ENCODE measurements at regions of chr6 and their contacts with region 1.

Region 1: GRCh38 chr6:137938770-137939379 is 71.8 kb downstream of the TNFAIP3 start:
- DNase-seq: no peak
- H3K4me3 ChIP-seq: no peak overlapping the region
- H3K27ac ChIP-seq: no peak overlapping the region
- H3K4me1 ChIP-seq: peaks cover 0 to 11% (median 4%) of the 10 kb centered on the region in 4 experiments
- H3K27me3 ChIP-seq: no peaks in the 10 kb centered on the region

Region 2: DNA sequence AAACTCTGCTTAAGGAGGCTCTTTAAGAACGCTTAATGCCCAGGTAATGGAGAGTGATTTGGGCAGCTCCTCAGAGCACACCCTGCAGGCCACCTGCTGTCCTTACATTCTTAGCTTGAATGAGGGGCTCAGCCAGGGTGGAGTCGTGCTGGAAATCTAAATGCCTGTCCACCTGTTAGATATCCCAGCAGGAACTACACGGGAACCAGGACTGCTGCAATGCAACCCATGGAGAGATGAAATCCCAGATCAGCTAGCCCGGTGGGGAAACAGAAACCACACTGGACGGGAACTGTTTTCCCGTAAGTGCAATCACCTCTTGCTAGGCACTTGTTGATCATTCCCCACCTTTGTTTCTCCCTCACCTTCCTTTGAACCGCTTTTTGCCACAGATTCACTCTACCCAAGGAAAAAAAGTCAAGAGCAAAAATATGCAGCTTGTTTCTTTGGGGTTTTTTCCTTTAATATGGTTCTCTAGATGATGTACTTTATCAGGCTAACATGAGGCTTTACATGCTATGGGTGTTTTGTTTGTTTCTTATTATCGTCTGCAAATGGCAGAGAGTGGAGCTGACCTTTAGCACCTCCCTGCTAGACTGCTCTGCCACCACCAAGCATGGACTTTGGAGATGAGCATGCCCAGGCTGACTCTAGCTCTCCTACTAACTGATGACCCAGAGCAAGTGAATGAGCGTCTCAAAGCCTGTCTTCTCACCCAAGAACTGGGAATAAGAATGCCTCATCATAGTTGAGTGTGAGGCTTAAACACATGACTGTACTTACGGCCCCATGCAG is 197.7 kb before region 1 on chr6:
- CTCF ChIA-PET with region 1: no interaction called
- POLR2A ChIA-PET with region 1: no interaction called
- DNase-seq: no peak
- H3K4me3 ChIP-seq: no peak overlapping the region
- H3K27ac ChIP-seq: no peak overlapping the region
- H3K4me1 ChIP-seq: peaks cover 0 to 11% (median 3%) of the 10 kb centered on the region in 4 experiments
- H3K27me3 ChIP-seq: no peaks in the 10 kb centered on the region

Region 3: DNA sequence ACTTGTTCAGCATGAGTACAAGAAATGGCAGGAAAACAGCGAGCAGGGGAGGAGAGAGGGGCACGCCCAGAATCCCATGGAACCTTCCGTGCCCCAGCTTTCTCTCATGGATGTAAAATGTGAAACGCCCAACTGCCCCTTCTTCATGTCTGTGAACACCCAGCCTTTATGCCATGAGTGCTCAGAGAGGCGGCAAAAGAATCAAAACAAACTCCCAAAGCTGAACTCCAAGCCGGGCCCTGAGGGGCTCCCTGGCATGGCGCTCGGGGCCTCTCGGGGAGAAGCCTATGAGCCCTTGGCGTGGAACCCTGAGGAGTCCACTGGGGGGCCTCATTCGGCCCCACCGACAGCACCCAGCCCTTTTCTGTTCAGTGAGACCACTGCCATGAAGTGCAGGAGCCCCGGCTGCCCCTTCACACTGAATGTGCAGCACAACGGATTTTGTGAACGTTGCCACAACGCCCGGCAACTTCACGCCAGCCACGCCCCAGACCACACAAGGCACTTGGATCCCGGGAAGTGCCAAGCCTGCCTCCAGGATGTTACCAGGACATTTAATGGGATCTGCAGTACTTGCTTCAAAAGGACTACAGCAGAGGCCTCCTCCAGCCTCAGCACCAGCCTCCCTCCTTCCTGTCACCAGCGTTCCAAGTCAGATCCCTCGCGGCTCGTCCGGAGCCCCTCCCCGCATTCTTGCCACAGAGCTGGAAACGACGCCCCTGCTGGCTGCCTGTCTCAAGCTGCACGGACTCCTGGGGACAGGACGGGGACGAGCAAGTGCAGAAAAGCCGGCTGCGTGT is 60.2 kb before region 1 on chr6:
- CTCF ChIA-PET with region 1: interaction called, 19 read pairs
- POLR2A ChIA-PET with region 1: no interaction called
- DNase-seq: no peak
- H3K4me3 ChIP-seq: no peak overlapping the region
- H3K27ac ChIP-seq: no peak overlapping the region
- H3K4me1 ChIP-seq: peaks cover 2 to 19% (median 15%) of the 10 kb centered on the region in 4 experiments
- H3K27me3 ChIP-seq: no peaks in the 10 kb centered on the region

Region 4: GRCh38 chr6:137921823-137922222 is 17.1 kb before region 1 on chr6:
- CTCF ChIA-PET with region 1: interaction called, 15 read pairs
- POLR2A ChIA-PET with region 1: no interaction called
- DNase-seq: peak in 2 of 3 donors; percentile 36 to 38
- H3K4me3 ChIP-seq: no peak overlapping the region
- H3K27ac ChIP-seq: no peak overlapping the region
- H3K4me1 ChIP-seq: peaks cover 12 to 28% (median 22%) of the 10 kb centered on the region in 4 experiments
- H3K27me3 ChIP-seq: no peaks in the 10 kb centered on the region

Region 5: GRCh38 chr6:137951064-137951597 is 12.3 kb after region 1 on chr6:
- CTCF ChIA-PET with region 1: interaction called, 22 read pairs
- POLR2A ChIA-PET with region 1: no interaction called
- DNase-seq: no peak
- H3K4me3 ChIP-seq: no peak overlapping the region
- H3K27ac ChIP-seq: no peak overlapping the region
- H3K4me1 ChIP-seq: no peaks in the 10 kb centered on the region
- H3K27me3 ChIP-seq: peaks cover 0 to 2% (median 0%) of the 10 kb centered on the region in 5 experiments